ENCODE measurements at regions of chr5 and their contacts with region 1.

Region 1: DNA sequence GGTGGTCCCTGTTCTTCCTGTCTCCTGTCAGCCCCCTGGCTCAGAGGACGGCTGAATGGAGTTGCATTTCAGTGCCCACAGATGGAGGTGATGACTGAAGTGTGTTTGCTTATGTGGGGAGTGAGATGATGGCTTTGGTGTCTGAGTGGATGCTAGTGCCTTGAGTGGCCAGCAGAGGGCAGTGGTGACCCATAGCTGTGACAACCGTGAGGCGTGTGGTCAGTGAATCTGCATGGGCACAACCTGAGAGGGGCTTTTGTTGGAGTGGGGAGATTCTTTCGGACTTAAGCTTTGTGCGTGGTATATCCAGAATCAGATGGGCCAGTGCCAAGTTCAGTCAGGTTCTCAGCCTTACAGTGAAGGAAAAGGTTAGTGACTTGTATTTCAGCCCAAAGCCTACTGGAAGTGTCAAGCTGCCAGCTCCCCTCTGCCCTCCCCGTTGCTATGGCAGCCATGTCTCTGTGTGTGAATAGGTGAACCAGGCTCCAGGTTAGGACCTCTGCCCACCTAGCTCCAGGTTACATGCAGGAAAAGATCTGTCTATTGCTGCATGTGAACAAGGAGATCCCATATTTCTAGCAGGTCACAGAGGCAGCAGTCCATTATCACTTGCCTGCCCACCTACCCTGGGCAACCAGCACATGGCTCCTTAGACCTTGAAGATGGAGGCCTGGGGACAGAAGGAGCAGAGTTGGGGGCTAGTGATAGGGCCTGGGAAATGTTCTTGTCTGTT is 14.7 kb upstream of the CXXC5 start:
- DNase-seq: peak; percentile 81
- ATAC-seq: peak; percentile 36
- H3K4me3 ChIP-seq: no peak overlapping the region
- H3K27ac ChIP-seq: no peak overlapping the region
- H3K4me1 ChIP-seq: peaks cover 25% of the 10 kb centered on the region
- H3K27me3 ChIP-seq: no peaks in the 10 kb centered on the region
- CTCF ChIP-seq: peak; percentile 97

Region 2: GRCh38 chr5:139108063-139108824 is 525.2 kb before region 1 on chr5:
- CTCF ChIA-PET with region 1: no interaction called
- POLR2A ChIA-PET with region 1: no interaction called
- intact Hi-C with region 1: no loop called
- DNase-seq: no peak
- ATAC-seq: no peak
- H3K4me3 ChIP-seq: no peak overlapping the region
- H3K27ac ChIP-seq: no peak overlapping the region
- H3K4me1 ChIP-seq: no peaks in the 10 kb centered on the region
- H3K27me3 ChIP-seq: no peaks in the 10 kb centered on the region
- CTCF ChIP-seq: no peak

Region 3: GRCh38 chr5:139562847-139563246 is 70.6 kb before region 1 on chr5:
- CTCF ChIA-PET with region 1: no interaction called
- POLR2A ChIA-PET with region 1: no interaction called
- intact Hi-C with region 1: no loop called
- DNase-seq: peak; percentile 21
- ATAC-seq: no peak
- H3K4me3 ChIP-seq: peak overlapping the region; percentile 75
- H3K27ac ChIP-seq: no peak overlapping the region
- H3K4me1 ChIP-seq: peaks cover 12% of the 10 kb centered on the region
- H3K27me3 ChIP-seq: no peaks in the 10 kb centered on the region
- CTCF ChIP-seq: no peak

Region 4: GRCh38 chr5:139574641-139575312 is 58.7 kb before region 1 on chr5:
- CTCF ChIA-PET with region 1: interaction called, 5 read pairs
- POLR2A ChIA-PET with region 1: no interaction called
- intact Hi-C with region 1: loop called (anchors 2 kb)
- DNase-seq: peak; percentile 60
- ATAC-seq: peak; percentile 71
- H3K4me3 ChIP-seq: no peak overlapping the region
- H3K27ac ChIP-seq: no peak overlapping the region
- H3K4me1 ChIP-seq: no peaks in the 10 kb centered on the region
- H3K27me3 ChIP-seq: no peaks in the 10 kb centered on the region
- CTCF ChIP-seq: peak; percentile 75

Region 5: DNA sequence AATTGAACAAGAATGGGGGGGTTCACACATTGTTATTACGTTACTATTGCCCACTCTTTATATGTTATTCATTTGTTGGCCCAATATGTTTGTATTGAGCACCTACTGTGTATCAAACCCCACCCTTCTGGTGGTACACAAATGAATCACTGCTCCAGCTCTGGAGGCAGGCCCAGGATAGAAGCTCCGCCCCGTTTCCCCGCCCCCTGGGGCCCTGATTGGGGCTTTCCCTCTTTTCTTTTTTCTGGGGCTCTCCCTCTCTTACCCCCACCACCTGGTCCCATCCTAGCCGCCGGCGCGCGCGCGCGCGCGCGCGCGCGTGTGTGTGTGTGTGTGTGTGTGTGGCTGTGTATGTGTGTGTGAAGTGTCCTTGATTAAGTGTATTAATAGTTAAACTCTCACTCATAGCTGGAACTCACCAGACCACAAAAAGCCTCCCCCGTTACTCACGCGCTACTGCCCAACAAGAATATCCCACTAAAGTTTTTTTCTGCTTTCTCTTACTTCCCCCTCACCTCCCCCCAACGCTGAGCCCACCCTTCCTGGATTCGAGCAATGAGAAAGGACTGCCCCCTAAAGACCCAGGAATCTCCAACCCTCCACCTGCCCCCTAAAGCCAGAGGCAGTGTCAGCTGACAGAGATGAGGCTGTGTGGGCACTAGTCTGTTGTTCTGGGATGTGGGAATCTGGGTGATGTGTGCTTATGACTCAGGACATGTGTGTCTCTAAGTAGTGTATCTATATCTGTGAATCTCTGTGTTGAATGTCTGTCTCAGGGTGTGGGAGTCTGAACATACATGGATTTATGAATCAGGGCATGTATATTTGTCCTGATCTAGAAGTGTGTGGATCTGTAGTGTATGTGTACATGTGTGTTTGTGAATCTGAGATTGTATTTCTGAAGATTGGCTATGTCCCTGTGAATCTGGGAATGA is 18.7 kb after region 1 on chr5:
- CTCF ChIA-PET with region 1: interaction called, 14 read pairs
- POLR2A ChIA-PET with region 1: no interaction called
- intact Hi-C with region 1: loop called (anchors 1 kb)
- DNase-seq: peak; percentile 73
- ATAC-seq: peak; percentile 51
- H3K4me3 ChIP-seq: peak overlapping the region; percentile 15; the same call in 1 of the 2 replicates
- H3K27ac ChIP-seq: peak overlapping the region; percentile 7
- H3K4me1 ChIP-seq: peaks cover 33% of the 10 kb centered on the region
- H3K27me3 ChIP-seq: peaks cover 16% of the 10 kb centered on the region
- CTCF ChIP-seq: no peak

Region 6: GRCh38 chr5:139690064-139690802 is 56.8 kb after region 1 on chr5:
- CTCF ChIA-PET with region 1: interaction called, 8 read pairs
- POLR2A ChIA-PET with region 1: no interaction called
- intact Hi-C with region 1: loop called (anchors 1 kb)
- DNase-seq: peak; percentile 69
- ATAC-seq: peak; percentile 78
- H3K4me3 ChIP-seq: no peak overlapping the region
- H3K27ac ChIP-seq: no peak overlapping the region
- H3K4me1 ChIP-seq: no peaks in the 10 kb centered on the region
- H3K27me3 ChIP-seq: no peaks in the 10 kb centered on the region
- CTCF ChIP-seq: peak; percentile 77

Region 7: GRCh38 chr5:139765409-139766217 is 132.2 kb after region 1 on chr5:
- CTCF ChIA-PET with region 1: interaction called, 4 read pairs
- POLR2A ChIA-PET with region 1: no interaction called
- intact Hi-C with region 1: loop called (anchors 1 kb)
- DNase-seq: peak; percentile 66
- ATAC-seq: peak; percentile 93
- H3K4me3 ChIP-seq: peak overlapping the region; percentile 76
- H3K27ac ChIP-seq: no peak overlapping the region
- H3K4me1 ChIP-seq: no peaks in the 10 kb centered on the region
- H3K27me3 ChIP-seq: no peaks in the 10 kb centered on the region
- CTCF ChIP-seq: peak; percentile 93